ENCODE measurements at regions of chr11 and their contacts with region 1.

Region 1: DNA sequence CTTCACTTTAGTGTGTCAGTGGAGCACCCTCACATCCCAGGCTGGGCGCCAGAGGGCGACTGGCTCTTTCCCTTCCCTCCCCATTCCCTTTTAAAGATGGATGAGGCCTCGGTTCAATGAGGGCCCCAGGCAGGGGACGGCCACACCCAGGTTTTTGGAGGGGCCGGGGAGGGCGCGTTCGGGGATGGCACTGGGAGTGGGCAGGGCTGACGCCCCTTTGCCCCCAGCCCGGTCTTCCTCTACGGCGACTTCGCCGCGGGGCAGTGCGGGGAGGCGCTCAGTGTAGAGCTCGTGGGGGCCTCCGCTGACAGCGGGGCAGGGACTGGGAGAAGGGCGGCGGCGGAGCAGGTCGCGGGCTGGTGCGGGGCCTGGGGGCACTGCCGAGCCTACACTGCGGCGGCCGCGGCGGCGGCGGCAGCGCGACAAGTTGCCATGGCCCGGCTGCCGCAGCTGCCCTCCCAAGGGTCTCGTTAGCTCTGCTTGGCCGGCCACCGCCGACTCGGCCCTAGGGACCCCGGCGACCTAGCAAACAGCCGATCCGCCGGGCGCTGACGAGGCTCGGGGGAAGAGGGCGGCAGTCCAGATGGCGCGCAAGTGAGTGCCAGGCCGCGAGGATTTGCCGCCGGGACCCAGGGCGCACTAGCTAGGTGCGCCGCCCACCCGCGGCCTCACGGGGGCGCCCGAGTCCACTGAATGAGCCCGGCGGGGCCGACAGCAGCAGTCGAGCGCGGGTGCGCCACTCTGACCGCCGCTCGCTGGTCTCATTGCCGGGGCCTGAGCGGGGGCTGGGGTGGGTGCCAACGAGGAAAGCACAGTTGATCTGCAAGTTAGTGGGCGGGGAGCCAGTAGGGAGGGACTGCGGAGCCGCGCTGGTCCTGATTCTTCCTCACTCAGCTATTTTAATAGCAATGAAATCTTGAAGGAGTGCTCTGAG is 92.7 kb downstream of the RRM1 start:
- DNase-seq: peak; percentile 92
- H3K4me3 Mint-ChIP-seq: peak overlapping the region; percentile 71
- H3K27ac Mint-ChIP-seq: no peak overlapping the region
- H3K4me1 Mint-ChIP-seq: no peaks in the 10 kb centered on the region
- H3K27me3 Mint-ChIP-seq: no peaks in the 10 kb centered on the region
- CTCF ChIP-seq: peak; percentile 96

Region 2: GRCh38 chr11:4496557-4497275 is 309.4 kb after region 1 on chr11:
- CTCF ChIA-PET with region 1: interaction called, 23 read pairs
- intact Hi-C with region 1: loop called (anchors 1 kb)
- DNase-seq: peak; percentile 4
- H3K4me3 Mint-ChIP-seq: no peak overlapping the region
- H3K27ac Mint-ChIP-seq: no peak overlapping the region
- H3K4me1 Mint-ChIP-seq: peaks cover 31% of the 10 kb centered on the region
- H3K27me3 Mint-ChIP-seq: peaks cover 73% of the 10 kb centered on the region
- CTCF ChIP-seq: no peak

Region 3: DNA sequence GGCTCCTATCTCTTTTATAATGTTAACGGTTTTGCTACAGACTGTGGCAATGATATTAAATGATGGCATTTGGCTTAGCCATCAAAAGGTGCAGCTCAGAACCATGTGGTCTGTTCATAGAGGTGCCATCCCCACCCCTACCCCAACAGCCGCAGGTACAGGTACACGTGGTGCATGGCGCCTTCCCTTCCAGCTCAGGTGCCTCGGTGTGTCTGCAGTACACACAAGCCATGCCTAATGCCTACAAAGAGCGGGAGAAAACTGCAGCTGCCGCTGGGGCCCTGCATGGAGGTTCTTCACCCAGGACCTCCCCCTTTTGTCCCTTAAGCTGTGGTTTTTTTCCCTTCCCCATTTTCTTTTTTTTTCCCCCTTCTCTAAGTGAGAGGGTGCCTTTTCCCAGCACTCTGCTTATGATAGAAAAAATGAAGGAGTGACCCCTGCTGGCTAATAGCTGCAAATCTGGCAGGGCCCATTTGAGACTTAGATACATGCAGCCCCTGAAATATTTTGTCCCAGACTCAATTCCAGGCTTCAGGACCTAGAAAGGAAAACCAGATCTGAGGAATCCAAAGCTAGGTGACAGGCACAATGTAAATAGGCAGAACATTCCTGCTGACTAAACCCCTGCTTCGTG is 364.1 kb after region 1 on chr11:
- CTCF ChIA-PET with region 1: interaction called, 11 read pairs
- intact Hi-C with region 1: no loop called
- DNase-seq: peak; percentile 8
- H3K4me3 Mint-ChIP-seq: no peak overlapping the region
- H3K27ac Mint-ChIP-seq: no peak overlapping the region
- H3K4me1 Mint-ChIP-seq: peaks cover 8% of the 10 kb centered on the region
- H3K27me3 Mint-ChIP-seq: peaks cover 64% of the 10 kb centered on the region
- CTCF ChIP-seq: peak; percentile 54

Region 4: GRCh38 chr11:4626207-4627099 is 439.1 kb after region 1 on chr11:
- CTCF ChIA-PET with region 1: no interaction called
- intact Hi-C with region 1: loop called (anchors 5 kb)
- DNase-seq: peak; percentile 77
- H3K4me3 Mint-ChIP-seq: no peak overlapping the region
- H3K27ac Mint-ChIP-seq: no peak overlapping the region
- H3K4me1 Mint-ChIP-seq: peaks cover 8% of the 10 kb centered on the region
- H3K27me3 Mint-ChIP-seq: peaks cover 64% of the 10 kb centered on the region
- CTCF ChIP-seq: peak; percentile 73

Region 5: GRCh38 chr11:5004424-5005274 is 817.3 kb after region 1 on chr11:
- CTCF ChIA-PET with region 1: no interaction called
- intact Hi-C with region 1: loop called (anchors 5 kb)
- DNase-seq: peak; percentile 58
- H3K4me3 Mint-ChIP-seq: no peak overlapping the region
- H3K27ac Mint-ChIP-seq: no peak overlapping the region
- H3K4me1 Mint-ChIP-seq: no peaks in the 10 kb centered on the region
- H3K27me3 Mint-ChIP-seq: peaks cover 13% of the 10 kb centered on the region
- CTCF ChIP-seq: peak; percentile 37

Measured in Calu3 (cell line).